Activated naive CD4-positive, alpha-beta T cell treated with anti-CD3 and anti-CD28 coated beads for 36 hours (primary cell): ENCODE measurements at regions of chr12 and their contacts with region 1.

Region 1: GRCh38 chr12:121773011-121773777 is 20.3 kb downstream of the RHOF start:
- DNase-seq: peak; percentile 83
- H3K4me3 Mint-ChIP-seq: no peak overlapping the region
- H3K27ac Mint-ChIP-seq: peak overlapping the region; percentile 61
- H3K4me1 Mint-ChIP-seq: peaks cover 6% of the 10 kb centered on the region
- H3K27me3 Mint-ChIP-seq: no peaks in the 10 kb centered on the region

Region 2: DNA sequence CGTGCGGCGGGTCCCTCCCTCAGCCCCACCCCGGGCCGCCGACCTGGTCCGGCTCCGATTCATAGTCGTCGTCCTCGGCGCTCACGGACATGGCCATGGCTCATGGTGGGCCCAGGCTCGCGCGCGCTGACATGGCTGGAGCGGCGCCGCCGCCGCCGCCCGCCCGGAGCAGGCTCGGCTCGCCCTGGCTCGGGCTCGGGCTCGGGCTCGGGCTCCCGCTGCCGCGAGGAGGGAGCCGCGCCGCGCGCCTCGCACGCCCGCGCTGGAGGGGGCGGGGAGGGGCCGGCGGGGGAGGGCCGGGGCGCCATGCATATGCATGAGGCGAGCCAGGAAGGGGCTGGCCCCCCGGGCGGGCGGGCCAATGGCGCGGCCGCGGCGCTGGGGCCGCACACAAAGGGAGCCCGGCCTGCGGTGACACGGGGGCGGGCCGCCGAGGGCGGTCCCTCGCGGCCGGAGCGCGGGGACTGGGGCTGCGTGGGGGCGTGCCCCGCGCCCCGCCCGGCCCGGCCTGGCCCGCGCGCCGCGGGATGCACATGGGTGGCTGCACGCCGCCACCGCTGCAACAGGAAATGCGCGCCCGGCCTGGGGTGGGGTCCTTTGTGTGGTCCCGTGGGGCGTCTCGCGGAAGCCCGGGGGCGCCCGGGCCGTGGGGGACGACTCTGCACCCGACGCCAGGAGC is 305.9 kb before region 1 on chr12:
- CTCF ChIA-PET with region 1: no interaction called
- intact Hi-C with region 1: loop called (anchors 5 kb)
- DNase-seq: peak; percentile 87
- H3K4me3 Mint-ChIP-seq: peak overlapping the region; percentile 43
- H3K27ac Mint-ChIP-seq: no peak overlapping the region
- H3K4me1 Mint-ChIP-seq: peaks cover 19% of the 10 kb centered on the region
- H3K27me3 Mint-ChIP-seq: no peaks in the 10 kb centered on the region

Region 3: DNA sequence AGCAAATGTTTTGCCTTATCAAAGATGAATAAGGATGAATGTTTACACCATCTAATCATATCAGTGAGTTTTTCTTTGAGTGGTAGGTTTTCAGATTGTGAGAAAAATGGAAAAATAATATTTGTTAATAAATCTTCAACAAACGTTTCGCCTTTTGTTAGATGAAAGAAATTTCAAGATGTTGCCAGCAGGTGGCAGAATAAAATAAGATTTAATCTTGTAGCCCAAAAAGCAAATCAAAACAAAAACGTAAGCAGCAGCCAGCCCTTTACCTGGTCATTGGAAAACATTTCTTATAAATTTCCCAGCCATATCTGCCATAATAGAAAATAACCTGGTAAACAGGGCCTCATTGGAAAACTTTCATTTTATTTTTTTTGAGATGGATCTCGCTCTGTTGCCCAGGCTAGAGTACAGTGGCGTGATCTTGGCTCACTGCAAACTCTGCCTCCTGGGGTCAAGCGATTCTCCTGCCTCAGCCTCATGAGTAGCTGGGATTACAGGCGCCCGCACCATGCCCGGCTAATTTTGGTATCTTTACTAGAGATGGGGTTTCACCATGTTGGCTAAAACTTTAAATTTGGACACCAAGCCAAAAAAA is 76.0 kb before region 1 on chr12:
- CTCF ChIA-PET with region 1: interaction called, 30 read pairs
- intact Hi-C with region 1: loop called (anchors 1 kb)
- DNase-seq: peak; percentile 38
- H3K4me3 Mint-ChIP-seq: no peak overlapping the region
- H3K27ac Mint-ChIP-seq: no peak overlapping the region
- H3K4me1 Mint-ChIP-seq: peaks cover 2% of the 10 kb centered on the region
- H3K27me3 Mint-ChIP-seq: no peaks in the 10 kb centered on the region

Region 4: DNA sequence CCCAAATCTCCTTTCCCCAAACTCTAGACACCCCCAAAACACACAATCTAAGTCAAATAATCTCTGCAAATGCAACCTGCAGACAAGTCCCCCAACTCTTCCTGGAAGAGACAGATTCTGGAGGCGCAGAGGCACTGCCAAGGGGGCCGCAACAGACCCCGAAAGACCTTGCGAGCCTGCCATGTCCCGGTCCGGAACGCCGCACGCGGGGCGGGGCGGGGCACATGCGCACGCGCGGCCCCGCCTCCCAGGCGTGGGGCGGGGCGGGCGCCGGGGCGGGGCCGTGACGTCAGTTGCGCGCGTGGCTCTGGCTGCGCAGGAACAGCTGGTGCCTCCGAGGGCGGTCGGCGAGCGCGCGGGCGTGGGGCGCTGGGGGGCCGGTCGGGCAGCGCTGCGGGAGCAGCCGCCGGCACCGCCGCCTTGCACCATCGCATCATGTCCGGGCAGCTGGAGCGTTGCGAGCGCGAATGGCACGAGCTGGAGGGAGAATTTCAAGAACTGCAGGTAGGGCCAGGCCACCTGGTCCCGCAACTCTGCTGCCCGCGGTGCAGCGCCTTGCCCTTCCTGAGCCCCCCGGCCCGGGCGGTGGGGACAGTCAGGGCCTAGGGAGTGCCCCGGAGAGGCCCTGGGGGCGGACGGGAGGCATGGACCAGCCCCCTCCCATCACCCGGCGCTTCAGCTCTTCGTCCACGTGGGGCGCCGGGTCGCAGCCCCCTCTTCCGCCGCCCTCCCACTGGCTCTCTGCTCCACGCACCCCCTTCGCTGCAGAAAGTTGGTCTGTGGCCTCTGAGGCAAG is 60.5 kb before region 1 on chr12 and contains the start of gene TMEM120B:
- CTCF ChIA-PET with region 1: interaction called, 20 read pairs
- intact Hi-C with region 1: loop called (anchors 1 kb)
- DNase-seq: peak; percentile 77
- H3K4me3 Mint-ChIP-seq: peak within 1 kb of the TSS; percentile 87
- H3K27ac Mint-ChIP-seq: peak within 1 kb of the TSS; percentile 77
- H3K4me1 Mint-ChIP-seq: peaks cover 19% of the 10 kb centered on the region
- H3K27me3 Mint-ChIP-seq: no peaks in the 10 kb centered on the region
- total RNA-seq, gene TMEM120B: 5.5 to 6.3 TPM

Region 5: DNA sequence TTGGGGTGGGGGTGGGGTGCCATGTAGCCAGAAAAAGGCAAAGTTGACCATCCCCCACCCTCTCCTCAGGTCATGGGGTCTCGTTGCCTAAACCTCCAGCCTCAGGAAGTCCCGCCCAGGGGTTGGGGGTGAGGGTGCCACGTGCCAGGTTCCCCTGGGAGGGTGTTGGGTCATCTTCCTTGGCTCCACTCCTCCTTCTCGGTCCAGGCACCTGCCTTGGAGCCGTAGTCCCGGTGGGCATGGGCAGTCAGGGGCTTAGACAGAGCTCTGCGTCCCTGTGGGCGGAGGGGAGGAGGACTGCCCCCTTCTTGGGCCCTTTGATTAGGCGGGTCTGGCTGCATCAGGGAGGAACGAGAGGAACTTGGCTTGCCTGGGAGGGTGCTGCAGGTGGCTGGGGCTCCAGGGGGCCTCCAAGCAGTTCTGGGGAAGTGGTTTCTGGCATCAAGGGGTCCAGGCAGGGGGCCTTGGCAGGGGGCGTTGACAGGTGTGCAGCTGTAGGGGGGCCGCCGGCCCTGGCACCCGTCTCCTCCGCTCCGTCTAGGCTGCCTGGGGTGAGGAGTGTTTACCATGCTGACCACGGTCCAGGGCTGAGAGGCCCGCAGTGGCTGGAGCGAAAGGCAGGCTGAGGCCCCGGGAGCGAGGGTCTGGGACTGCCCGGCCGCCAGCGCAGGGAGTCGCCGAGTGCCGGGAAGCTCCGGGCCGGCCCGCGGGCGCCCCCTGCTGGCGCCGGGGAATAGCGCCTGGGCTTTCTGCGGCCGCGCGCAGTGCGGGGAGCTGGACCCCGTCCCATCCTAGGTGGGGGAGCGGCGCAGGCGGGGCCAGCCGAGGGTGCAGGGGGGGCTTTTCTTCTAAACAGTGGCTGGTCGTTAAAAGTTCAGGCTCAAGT is 38.5 kb after region 1 on chr12:
- CTCF ChIA-PET with region 1: interaction called, 16 read pairs
- intact Hi-C with region 1: loop called (anchors 1 kb)
- DNase-seq: peak; percentile 67
- H3K4me3 Mint-ChIP-seq: peak overlapping the region; percentile 78
- H3K27ac Mint-ChIP-seq: peak overlapping the region; percentile 86
- H3K4me1 Mint-ChIP-seq: peaks cover 52% of the 10 kb centered on the region
- H3K27me3 Mint-ChIP-seq: no peaks in the 10 kb centered on the region

Region 6: GRCh38 chr12:121829250-121829918 is 56.2 kb after region 1 on chr12:
- CTCF ChIA-PET with region 1: no interaction called
- intact Hi-C with region 1: no loop called
- DNase-seq: no peak
- H3K4me3 Mint-ChIP-seq: no peak overlapping the region
- H3K27ac Mint-ChIP-seq: peak overlapping the region; percentile 36
- H3K4me1 Mint-ChIP-seq: no peaks in the 10 kb centered on the region
- H3K27me3 Mint-ChIP-seq: no peaks in the 10 kb centered on the region

Region 7: GRCh38 chr12:121872546-121873215 is 99.5 kb after region 1 on chr12:
- CTCF ChIA-PET with region 1: no interaction called
- intact Hi-C with region 1: no loop called
- DNase-seq: peak; percentile 10
- H3K4me3 Mint-ChIP-seq: no peak overlapping the region
- H3K27ac Mint-ChIP-seq: no peak overlapping the region
- H3K4me1 Mint-ChIP-seq: peaks cover 3% of the 10 kb centered on the region
- H3K27me3 Mint-ChIP-seq: no peaks in the 10 kb centered on the region